ENCODE measurements at regions of chr10 and their contacts with region 1.

Region 1: GRCh38 chr10:25080880-25081581 is 64.6 kb downstream of the THNSL1 start:
- DNase-seq: peak; percentile 72
- H3K4me3 ChIP-seq: no peak overlapping the region
- H3K27ac ChIP-seq: no peak overlapping the region
- H3K4me1 ChIP-seq: no peaks in the 10 kb centered on the region
- H3K27me3 ChIP-seq: no peaks in the 10 kb centered on the region
- CTCF ChIP-seq: peak; percentile 87 to 95

Region 2: GRCh38 chr10:24989867-24990266 is 91.2 kb before region 1 on chr10:
- CTCF ChIA-PET with region 1: no interaction called
- dilution Hi-C with region 1: no loop called
- in situ Hi-C with region 1: no loop called
- intact Hi-C with region 1: loop called (anchors 1 kb)
- DNase-seq: no peak
- H3K4me3 ChIP-seq: no peak overlapping the region
- H3K27ac ChIP-seq: no peak overlapping the region
- H3K4me1 ChIP-seq: no peaks in the 10 kb centered on the region
- H3K27me3 ChIP-seq: no peaks in the 10 kb centered on the region
- CTCF ChIP-seq: no peak

Region 3: GRCh38 chr10:25026463-25026862 is 54.6 kb before region 1 on chr10:
- CTCF ChIA-PET with region 1: interaction called, 3 read pairs
- dilution Hi-C with region 1: no loop called
- in situ Hi-C with region 1: no loop called
- intact Hi-C with region 1: loop called (anchors 1 kb)
- DNase-seq: no peak
- H3K4me3 ChIP-seq: no peak overlapping the region
- H3K27ac ChIP-seq: no peak overlapping the region
- H3K4me1 ChIP-seq: no peaks in the 10 kb centered on the region
- H3K27me3 ChIP-seq: no peaks in the 10 kb centered on the region
- CTCF ChIP-seq: peak; percentile 41 to 53

Region 4: DNA sequence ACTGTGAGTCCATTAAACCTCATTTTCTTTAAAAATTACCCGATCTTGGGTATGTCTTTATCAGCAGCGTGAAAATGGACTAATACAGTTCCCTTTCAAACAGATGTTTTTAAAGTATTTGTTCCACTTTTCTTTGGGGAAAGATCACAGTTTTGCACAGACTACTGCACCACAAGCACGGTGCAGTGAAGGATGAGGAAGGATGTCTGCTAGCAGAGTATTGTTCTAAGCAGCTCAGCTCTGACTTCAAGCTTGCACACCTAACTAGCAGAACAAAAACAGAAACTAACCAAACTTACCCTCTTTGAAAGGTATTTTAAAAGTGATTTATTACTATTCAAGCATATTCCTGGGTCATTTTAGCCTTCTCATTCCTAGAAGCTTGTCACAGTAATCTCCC is 44.6 kb before region 1 on chr10:
- CTCF ChIA-PET with region 1: no interaction called
- dilution Hi-C with region 1: loop called (anchors 5 kb)
- in situ Hi-C with region 1: no loop called
- intact Hi-C with region 1: no loop called
- DNase-seq: no peak
- H3K4me3 ChIP-seq: no peak overlapping the region
- H3K27ac ChIP-seq: no peak overlapping the region
- H3K4me1 ChIP-seq: no peaks in the 10 kb centered on the region
- H3K27me3 ChIP-seq: no peaks in the 10 kb centered on the region
- CTCF ChIP-seq: no peak

Region 5: GRCh38 chr10:25191162-25191895 is 110.3 kb after region 1 on chr10:
- CTCF ChIA-PET with region 1: no interaction called
- dilution Hi-C with region 1: no loop called
- in situ Hi-C with region 1: no loop called
- intact Hi-C with region 1: no loop called
- DNase-seq: no peak
- H3K4me3 ChIP-seq: no peak overlapping the region
- H3K27ac ChIP-seq: no peak overlapping the region
- H3K4me1 ChIP-seq: no peaks in the 10 kb centered on the region
- H3K27me3 ChIP-seq: no peaks in the 10 kb centered on the region
- CTCF ChIP-seq: no peak

Region 6: GRCh38 chr10:25288181-25288580 is 207.2 kb after region 1 on chr10:
- CTCF ChIA-PET with region 1: no interaction called
- dilution Hi-C with region 1: no loop called
- in situ Hi-C with region 1: no loop called
- intact Hi-C with region 1: no loop called
- DNase-seq: no peak
- H3K4me3 ChIP-seq: no peak overlapping the region
- H3K27ac ChIP-seq: no peak overlapping the region
- H3K4me1 ChIP-seq: no peaks in the 10 kb centered on the region
- H3K27me3 ChIP-seq: no peaks in the 10 kb centered on the region
- CTCF ChIP-seq: no peak

Measured in mammary epithelial cell (primary cell).